Upper lobe of right lung (tissue), 1 donor: ENCODE measurements at regions of chr6 and their contacts with region 1.

Region 1: GRCh38 chr6:7238900-7239589 is 74.0 kb downstream of the SSR1 start:
- DNase-seq: peak; percentile 94
- ATAC-seq: peak; percentile 89
- H3K4me3 ChIP-seq: no peak overlapping the region
- H3K27ac ChIP-seq: peak overlapping the region; percentile 18
- H3K4me1 ChIP-seq: peaks cover 33% of the 10 kb centered on the region
- H3K27me3 ChIP-seq: no peaks in the 10 kb centered on the region
- CTCF ChIP-seq: peak; percentile 66

Region 2: DNA sequence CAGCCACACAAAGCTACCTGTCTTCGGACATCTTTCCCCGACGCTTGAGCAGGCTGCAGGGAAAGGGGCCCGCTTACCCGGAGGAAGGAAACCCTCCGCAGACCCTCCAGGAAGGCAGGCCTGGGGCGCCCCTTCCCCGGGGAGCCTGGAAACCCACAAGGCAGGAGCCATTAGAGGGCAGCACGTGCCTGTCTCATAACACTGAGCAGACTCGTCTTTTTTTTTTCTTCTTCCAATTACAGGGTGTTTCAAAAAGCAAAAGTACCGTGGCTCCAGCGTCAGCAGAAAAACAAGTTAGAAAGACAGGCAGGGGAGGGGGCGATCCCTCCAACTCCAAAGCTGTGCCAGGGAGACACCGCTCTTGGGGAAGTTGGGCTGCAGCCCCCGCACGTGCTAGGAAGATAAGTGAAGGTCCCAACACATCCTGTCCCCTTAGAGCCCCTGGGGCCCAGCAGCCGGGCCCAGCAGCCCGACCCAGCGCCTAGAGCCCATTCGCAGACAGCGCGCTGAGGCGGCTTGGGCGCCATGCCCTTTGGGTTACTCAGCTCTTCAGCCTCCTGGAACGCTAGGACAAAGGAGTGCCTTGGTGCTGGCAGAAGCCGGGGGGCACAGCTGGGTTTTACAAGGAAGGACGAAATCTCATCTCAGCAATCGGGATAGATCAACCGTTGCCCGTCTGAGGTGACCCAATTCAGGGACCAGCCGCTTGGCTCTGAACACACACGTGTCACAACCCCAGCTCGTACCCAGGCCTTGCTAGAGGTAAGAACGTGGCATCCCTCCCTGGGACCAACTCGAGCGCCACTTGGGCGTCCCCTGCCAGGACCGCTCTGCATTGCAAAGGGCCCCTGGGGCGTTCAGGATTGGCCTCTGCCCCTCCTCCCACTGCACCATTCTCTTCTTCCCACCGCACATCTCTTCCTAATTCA is 514.2 kb before region 1 on chr6:
- intact Hi-C with region 1: loop called (anchors 10 kb)
- DNase-seq: peak; percentile 85
- ATAC-seq: peak; percentile 72
- H3K4me3 ChIP-seq: peak overlapping the region; percentile 43
- H3K27ac ChIP-seq: peak overlapping the region; percentile 93
- H3K4me1 ChIP-seq: peaks cover 34% of the 10 kb centered on the region
- H3K27me3 ChIP-seq: no peaks in the 10 kb centered on the region
- CTCF ChIP-seq: peak; percentile 63

Region 3: DNA sequence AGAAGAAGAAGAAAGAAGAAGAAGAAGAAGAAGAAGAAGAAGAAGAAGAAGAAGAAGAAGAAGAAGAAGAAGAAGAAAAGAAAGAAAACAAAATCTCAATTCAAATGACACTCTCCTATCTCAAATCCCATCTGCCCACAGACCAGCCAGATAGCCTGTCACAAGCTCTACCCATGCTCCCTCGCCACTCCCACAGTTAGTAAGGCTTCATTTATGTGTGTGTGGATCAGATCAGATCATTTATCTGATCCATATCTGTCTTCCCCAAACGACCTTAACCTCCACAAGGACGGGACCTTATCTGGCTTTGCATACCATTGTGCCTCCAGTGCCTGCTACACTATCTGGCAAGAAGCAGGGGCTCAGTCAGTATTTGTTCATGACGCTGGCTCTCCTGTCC is 213.2 kb before region 1 on chr6:
- intact Hi-C with region 1: no loop called
- DNase-seq: no peak
- ATAC-seq: no peak
- H3K4me3 ChIP-seq: no peak overlapping the region
- H3K27ac ChIP-seq: no peak overlapping the region
- H3K4me1 ChIP-seq: no peaks in the 10 kb centered on the region
- H3K27me3 ChIP-seq: no peaks in the 10 kb centered on the region
- CTCF ChIP-seq: no peak

Region 4: GRCh38 chr6:7107578-7108195 is 131.4 kb before region 1 on chr6 and contains the start of gene RREB1:
- intact Hi-C with region 1: loop called (anchors 10 kb)
- DNase-seq: peak; percentile 84
- ATAC-seq: peak; percentile 81
- H3K4me3 ChIP-seq: peak within 1 kb of the TSS; percentile 97
- H3K27ac ChIP-seq: peak within 1 kb of the TSS; percentile 91
- H3K4me1 ChIP-seq: peaks cover 28% of the 10 kb centered on the region
- H3K27me3 ChIP-seq: no peaks in the 10 kb centered on the region
- CTCF ChIP-seq: no peak
- total RNA-seq, gene RREB1: 60.2 TPM

Region 5: GRCh38 chr6:7431674-7432390 is 192.8 kb after region 1 on chr6:
- intact Hi-C with region 1: no loop called
- DNase-seq: no peak
- ATAC-seq: peak; percentile 46
- H3K4me3 ChIP-seq: no peak overlapping the region
- H3K27ac ChIP-seq: no peak overlapping the region
- H3K4me1 ChIP-seq: no peaks in the 10 kb centered on the region
- H3K27me3 ChIP-seq: no peaks in the 10 kb centered on the region
- CTCF ChIP-seq: no peak